MCF 10A (cell line): ENCODE measurements at regions of chr3 and their contacts with region 1.

Region 1: GRCh38 chr3:186930641-186931531 is 560 bp downstream of the ST6GAL1 start:
- DNase-seq: peak; percentile 60
- H3K4me3 Mint-ChIP-seq: peak overlapping the region; percentile 88
- H3K27ac Mint-ChIP-seq: peak overlapping the region; percentile 64
- H3K4me1 Mint-ChIP-seq: peaks cover 26% of the 10 kb centered on the region
- H3K27me3 Mint-ChIP-seq: no peaks in the 10 kb centered on the region
- CTCF ChIP-seq: no peak

Region 2: DNA sequence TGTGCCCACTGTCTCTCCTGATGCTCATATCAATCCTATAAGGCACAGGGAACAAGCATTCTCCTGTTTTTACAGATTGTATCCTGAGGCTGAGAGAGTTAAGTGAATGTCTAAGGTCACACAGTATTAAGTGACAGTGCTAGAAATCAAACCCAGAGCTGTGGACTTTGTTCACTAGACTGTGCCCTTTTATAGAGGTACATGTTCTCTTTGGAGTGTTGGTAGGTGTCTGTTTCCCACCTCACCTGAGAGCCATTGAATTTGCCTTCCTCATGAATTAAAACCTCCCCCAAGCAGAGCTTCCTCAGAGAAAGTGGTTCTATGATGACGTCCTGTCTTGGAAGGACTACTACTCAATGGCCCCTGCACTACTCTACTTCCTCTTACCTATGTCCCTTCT is 75.9 kb before region 1 on chr3:
- CTCF ChIA-PET with region 1: interaction called, 20 read pairs
- POLR2A ChIA-PET with region 1: interaction called, 16 read pairs
- intact Hi-C with region 1: loop called (anchors 5 kb)
- DNase-seq: no peak
- H3K4me3 Mint-ChIP-seq: no peak overlapping the region
- H3K27ac Mint-ChIP-seq: no peak overlapping the region
- H3K4me1 Mint-ChIP-seq: no peaks in the 10 kb centered on the region
- H3K27me3 Mint-ChIP-seq: no peaks in the 10 kb centered on the region
- CTCF ChIP-seq: no peak

Region 3: GRCh38 chr3:186882881-186883685 is 47.8 kb before region 1 on chr3:
- CTCF ChIA-PET with region 1: no interaction called
- POLR2A ChIA-PET with region 1: no interaction called
- intact Hi-C with region 1: loop called (anchors 5 kb)
- DNase-seq: peak; percentile 79
- H3K4me3 Mint-ChIP-seq: no peak overlapping the region
- H3K27ac Mint-ChIP-seq: no peak overlapping the region
- H3K4me1 Mint-ChIP-seq: peaks cover 11% of the 10 kb centered on the region
- H3K27me3 Mint-ChIP-seq: no peaks in the 10 kb centered on the region
- CTCF ChIP-seq: no peak

Region 4: DNA sequence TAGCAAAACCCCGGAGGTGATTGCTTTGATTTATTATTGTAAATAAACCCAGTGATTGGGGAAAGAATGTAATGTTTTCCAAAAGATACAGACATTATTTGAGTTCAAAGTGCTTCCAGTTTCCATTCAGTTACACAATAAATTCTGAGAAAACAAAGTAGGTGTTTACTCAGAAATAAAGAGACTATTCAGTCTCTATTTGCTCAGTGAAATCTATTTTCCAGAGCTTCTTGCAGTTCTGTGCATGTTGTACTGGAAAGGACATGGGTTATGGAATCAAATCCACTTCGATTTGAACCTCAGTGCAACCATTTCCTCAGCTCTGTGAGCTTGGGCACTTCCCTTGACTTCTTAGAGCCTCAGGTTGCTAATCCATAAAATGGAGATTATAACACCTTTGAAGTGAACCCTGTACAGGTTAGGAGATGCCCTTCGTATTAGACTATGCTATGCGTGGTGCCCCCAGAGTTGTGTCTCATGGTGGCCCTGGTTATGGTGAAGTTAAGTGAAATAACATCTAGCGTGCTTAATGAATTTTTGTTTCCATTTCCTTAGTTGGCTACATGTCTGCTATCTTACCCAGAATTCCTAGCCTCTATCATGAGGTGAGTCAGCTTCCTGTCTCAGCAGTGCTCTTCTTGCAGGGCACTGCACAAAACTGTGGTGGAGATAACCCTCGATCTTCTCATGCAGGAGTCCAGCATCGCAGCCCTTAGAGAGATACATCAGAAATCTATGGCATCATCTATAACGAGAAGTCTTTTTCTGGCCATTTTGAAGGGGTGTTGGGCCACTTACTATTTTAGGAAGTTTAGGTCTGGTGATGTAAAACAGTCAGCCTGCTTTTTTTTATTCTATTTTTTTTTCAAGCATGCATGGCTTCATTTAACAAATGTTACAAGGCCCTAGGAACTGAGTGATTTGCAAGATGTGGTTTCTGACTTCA is 110.7 kb after region 1 on chr3:
- CTCF ChIA-PET with region 1: no interaction called
- POLR2A ChIA-PET with region 1: no interaction called
- intact Hi-C with region 1: no loop called
- DNase-seq: no peak
- H3K4me3 Mint-ChIP-seq: no peak overlapping the region
- H3K27ac Mint-ChIP-seq: no peak overlapping the region
- H3K4me1 Mint-ChIP-seq: peaks cover 9% of the 10 kb centered on the region
- H3K27me3 Mint-ChIP-seq: no peaks in the 10 kb centered on the region
- CTCF ChIP-seq: no peak

Region 5: DNA sequence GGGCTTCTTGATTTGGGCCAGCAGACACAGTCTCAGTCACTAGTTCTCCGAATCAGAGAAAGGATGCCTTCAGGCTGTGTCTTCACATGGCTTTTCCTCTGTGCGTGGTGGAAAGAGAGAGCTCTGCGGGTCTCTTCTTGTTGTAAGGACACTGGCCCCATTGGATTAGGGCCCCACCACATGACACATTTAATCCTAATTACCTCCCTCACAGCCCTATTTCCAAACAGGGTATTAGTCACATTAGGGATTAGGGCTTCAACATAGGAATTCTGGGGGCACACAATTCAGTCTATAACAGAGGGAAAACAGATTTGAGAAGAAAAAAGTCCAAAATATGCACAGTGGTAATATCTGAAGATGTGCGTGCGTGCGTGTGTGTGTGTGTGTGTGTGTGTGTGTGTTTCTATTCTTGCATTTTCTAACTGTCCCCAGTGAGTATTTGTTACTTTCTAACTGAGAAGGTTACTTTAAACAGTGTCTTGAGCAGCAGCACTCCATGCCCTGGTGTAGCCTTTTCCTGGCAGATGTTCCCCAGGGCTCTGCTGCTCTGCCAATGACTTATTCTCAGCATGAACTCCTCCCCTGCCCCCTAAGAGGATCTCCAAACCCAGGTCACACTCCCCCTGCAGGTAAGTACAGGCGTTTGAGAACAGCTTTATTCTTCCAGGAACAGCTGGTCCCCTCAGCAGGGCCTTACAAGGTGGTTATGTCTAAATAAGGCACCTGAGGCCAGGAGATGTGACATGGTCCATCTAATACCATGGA is 135.5 kb after region 1 on chr3:
- CTCF ChIA-PET with region 1: no interaction called
- POLR2A ChIA-PET with region 1: interaction called, 4 read pairs
- intact Hi-C with region 1: loop called (anchors 5 kb)
- DNase-seq: peak; percentile 83
- H3K4me3 Mint-ChIP-seq: no peak overlapping the region
- H3K27ac Mint-ChIP-seq: no peak overlapping the region
- H3K4me1 Mint-ChIP-seq: peaks cover 48% of the 10 kb centered on the region
- H3K27me3 Mint-ChIP-seq: no peaks in the 10 kb centered on the region
- CTCF ChIP-seq: peak; percentile 19